Heart right ventricle (tissue), 16 donors: ENCODE measurements at regions of chr18 and their contacts with region 1.

Region 1: GRCh38 chr18:47898696-47899095 is 31.8 kb downstream of the SMAD2 start:
- DNase-seq: no peak
- ATAC-seq: no peak
- H3K4me3 ChIP-seq: no peak overlapping the region
- H3K27ac ChIP-seq: no peak overlapping the region
- H3K4me1 ChIP-seq: peaks cover 0 to 72% (median 35%) of the 10 kb centered on the region in 9 donors
- H3K27me3 ChIP-seq: no peaks in the 10 kb centered on the region
- CTCF ChIP-seq: no peak

Region 2: DNA sequence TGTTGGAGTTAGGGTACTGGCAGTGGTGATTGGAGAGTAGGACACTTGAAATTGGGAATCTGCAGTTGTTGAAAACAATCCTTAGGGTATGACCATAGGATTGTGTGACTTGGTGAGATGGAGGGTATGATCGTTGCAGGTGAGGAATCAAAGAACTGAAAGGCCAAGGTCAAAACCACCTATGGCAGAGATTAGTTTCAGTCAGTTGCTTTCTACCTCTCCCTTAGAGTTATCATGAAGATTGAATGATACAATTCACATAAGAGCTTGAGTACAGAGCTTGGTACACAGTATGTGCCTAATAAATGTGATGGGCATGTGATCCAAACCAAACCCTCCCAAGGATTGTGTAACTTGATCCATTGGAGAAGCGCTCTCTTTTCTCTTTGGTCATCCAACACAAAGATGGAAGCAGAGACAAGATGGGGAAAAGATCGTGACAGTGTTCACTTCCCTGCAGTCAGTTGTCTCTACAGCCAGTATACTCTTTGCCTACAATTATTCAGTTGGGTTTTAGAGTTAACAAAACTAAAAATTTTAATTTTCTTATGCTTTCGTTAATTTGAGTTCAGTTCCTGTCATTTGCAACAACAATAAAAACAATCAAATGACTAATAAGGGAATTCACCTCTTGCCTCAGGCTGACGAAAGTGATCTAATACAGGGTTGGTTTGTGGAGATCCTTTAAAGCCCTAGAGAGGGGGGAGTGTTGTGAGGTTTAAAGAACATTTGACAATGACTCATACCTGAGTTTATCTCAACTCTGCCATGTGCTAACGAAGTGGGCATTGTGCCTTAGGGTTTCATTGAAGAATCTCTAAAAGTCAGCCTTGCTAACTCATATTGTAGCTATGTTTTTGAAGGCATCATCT is 46.5 kb after region 1 on chr18:
- intact Hi-C with region 1: loop called in 1 of 10 experiments (anchors 10 kb)
- DNase-seq: no peak
- ATAC-seq: peak in 1 of 8 donors; percentile 60
- H3K4me3 ChIP-seq: no peak overlapping the region
- H3K27ac ChIP-seq: no peak overlapping the region
- H3K4me1 ChIP-seq: peaks cover 0 to 11% (median 3%) of the 10 kb centered on the region in 9 donors
- H3K27me3 ChIP-seq: no peaks in the 10 kb centered on the region
- CTCF ChIP-seq: no peak